GM12878 (cell line): ENCODE measurements at regions of chr6 and their contacts with region 1.

Region 1: DNA sequence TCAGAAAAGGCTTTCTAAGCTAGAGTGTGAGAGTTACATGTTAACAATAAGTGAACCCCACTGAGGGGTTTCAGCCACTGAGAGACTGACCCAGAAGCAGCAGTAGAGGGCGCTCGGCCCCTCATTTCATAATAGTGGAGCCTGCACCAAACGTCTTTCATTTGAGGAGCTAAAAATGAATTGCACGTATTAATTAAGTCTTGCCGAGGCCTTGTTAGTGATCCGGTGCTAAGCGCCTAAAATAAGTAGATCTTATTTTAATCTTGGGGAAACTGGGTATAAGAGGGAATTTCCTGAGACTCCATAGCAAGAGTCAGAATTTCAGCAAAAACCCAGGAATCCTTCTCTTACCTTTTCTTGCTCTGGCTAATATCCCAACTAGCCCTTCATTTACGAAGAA is 209.7 kb downstream of the FARS2 start:
- DNase-seq: peak; percentile 26
- ATAC-seq: peak; percentile 99
- H3K4me3 ChIP-seq: 0 out of 2 replicates have a peak overlapping the region, but pooled peaks have one; percentile 3
- H3K27ac ChIP-seq: no peak overlapping the region
- H3K4me1 ChIP-seq: 0 out of 2 replicates have a peak, but pooled peaks cover 3% of the 10 kb centered on the region
- H3K27me3 ChIP-seq: no peaks in the 10 kb centered on the region
- CTCF ChIP-seq: peak; percentile 84 to 88 (median 87)
- EP300 ChIP-seq: no peak
- POLR2A ChIP-seq: no peak
- RAD21 ChIP-seq: peak; percentile 95

Region 2: DNA sequence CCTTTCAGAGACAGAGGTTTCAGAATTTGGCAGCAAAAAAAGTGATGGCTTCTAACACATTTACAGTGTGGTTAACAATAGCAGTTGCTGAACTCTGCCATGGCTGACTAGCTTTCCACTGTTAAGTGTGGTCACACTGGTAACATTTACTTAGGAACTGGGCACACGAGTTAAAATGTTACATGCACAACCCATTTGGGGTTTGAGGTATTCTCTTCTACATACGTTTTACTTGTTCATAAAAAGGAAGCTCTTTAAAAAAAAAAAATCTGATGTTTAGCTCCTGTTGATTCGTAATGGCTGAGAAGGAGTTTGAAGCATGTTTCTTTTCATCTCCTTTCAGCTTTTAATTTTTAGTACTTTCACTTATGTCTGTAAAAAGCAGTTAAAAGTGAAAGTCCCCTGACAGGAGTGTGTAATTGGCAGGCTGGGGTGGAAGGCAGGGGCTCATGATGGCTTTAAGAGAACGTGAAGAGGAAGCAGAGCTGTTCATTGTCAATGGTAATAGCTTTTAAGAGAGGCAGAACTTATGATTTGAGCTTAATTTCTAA is 36.2 kb after region 1 on chr6:
- CTCF ChIA-PET with region 1: interaction called, 43 read pairs
- POLR2A ChIA-PET with region 1: no interaction called
- RAD21 ChIA-PET with region 1: interaction called, 28 read pairs
- SMC1A ChIA-PET with region 1: interaction called, 31 read pairs
- in situ Hi-C with region 1: no loop called
- intact Hi-C with region 1: loop called (anchors 2 kb)
- DNase-seq: peak; percentile 92
- ATAC-seq: peak; percentile 94
- H3K4me3 ChIP-seq: peak overlapping the region; percentile 60
- H3K27ac ChIP-seq: peak overlapping the region; percentile 88
- H3K4me1 ChIP-seq: peaks cover 26% of the 10 kb centered on the region
- H3K27me3 ChIP-seq: no peaks in the 10 kb centered on the region
- CTCF ChIP-seq: no peak
- EP300 ChIP-seq: peak in 1 of 2 experiments; percentile 85; a peak in 3 of 4 replicates
- POLR2A ChIP-seq: no peak
- RAD21 ChIP-seq: no peak

Region 3: GRCh38 chr6:5670811-5671561 is 199.9 kb after region 1 on chr6:
- CTCF ChIA-PET with region 1: interaction called, 13 read pairs
- POLR2A ChIA-PET with region 1: no interaction called
- RAD21 ChIA-PET with region 1: interaction called, 15 read pairs
- SMC1A ChIA-PET with region 1: interaction called, 5 read pairs
- in situ Hi-C with region 1: no loop called
- intact Hi-C with region 1: no loop called
- DNase-seq: no peak
- ATAC-seq: peak; percentile 81
- H3K4me3 ChIP-seq: no peak overlapping the region
- H3K27ac ChIP-seq: no peak overlapping the region
- H3K4me1 ChIP-seq: peaks cover 7% of the 10 kb centered on the region
- H3K27me3 ChIP-seq: no peaks in the 10 kb centered on the region
- CTCF ChIP-seq: no peak
- EP300 ChIP-seq: no peak
- POLR2A ChIP-seq: peak; percentile 24; the same call in 1 of the 2 replicates
- RAD21 ChIP-seq: no peak

Region 4: DNA sequence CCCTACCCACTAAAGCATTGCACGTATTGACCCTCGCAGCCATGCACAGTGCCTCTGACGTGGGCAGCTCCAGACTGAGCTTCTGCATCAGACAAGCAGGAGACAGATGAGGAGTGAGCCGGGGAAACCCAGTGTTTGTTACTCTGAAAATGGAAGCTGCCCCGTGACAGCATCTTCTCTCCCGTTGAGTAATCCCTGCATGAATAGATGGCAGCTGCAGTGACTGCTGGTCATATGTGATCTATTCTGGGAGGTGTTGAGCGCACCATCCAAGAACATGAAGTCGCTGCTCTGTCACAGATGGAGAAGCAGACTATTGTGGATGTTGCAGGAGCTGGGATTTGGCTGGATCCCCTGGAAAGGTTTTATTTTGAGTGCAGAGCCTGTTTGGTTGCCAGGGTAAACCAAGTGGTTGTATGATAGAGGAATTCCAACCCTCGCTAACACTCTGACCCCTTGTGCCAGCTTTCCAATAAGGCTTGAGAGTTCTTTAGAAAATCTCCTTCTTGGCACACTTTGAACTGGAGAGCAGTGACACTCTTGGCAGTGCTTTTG is 293.4 kb after region 1 on chr6:
- CTCF ChIA-PET with region 1: interaction called, 4 read pairs
- POLR2A ChIA-PET with region 1: no interaction called
- RAD21 ChIA-PET with region 1: no interaction called
- SMC1A ChIA-PET with region 1: interaction called, 5 read pairs
- in situ Hi-C with region 1: no loop called
- intact Hi-C with region 1: loop called (anchors 10 kb)
- DNase-seq: peak; percentile 8
- ATAC-seq: no peak; the same call in 2 of the 3 replicates
- H3K4me3 ChIP-seq: no peak overlapping the region
- H3K27ac ChIP-seq: no peak overlapping the region
- H3K4me1 ChIP-seq: peaks cover 7% of the 10 kb centered on the region
- H3K27me3 ChIP-seq: no peaks in the 10 kb centered on the region
- CTCF ChIP-seq: no peak
- EP300 ChIP-seq: no peak
- POLR2A ChIP-seq: no peak
- RAD21 ChIP-seq: no peak

Region 5: DNA sequence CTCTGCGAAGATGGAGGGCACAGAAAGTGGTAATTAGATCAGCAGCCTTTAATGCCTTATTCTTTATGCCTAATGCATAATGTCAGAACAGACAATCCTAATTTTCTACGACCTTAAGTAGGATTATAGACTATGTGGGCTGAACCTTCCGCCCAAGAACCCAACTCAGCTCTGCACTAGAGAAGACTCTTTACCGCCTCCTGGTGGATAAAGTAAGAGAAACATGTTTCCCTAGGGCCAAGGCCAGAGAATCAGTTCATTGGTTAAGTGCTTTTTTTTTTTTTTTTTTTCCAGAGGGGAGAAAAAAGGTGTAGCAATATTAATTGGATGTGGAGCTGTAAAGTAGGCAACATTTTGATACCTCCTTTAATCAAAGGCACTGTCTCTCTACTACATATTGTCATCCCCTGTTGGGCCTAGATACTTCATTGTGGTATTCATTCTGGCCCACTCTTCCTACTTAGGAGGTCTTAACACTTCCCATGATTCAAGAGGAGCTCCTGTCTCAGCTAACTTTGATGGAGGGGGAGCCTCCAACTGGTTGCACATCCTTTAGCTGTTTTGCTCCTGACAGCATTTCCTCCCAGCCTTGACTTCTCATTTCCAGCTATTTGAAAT is 660.6 kb after region 1 on chr6:
- CTCF ChIA-PET with region 1: interaction called, 22 read pairs
- POLR2A ChIA-PET with region 1: no interaction called
- RAD21 ChIA-PET with region 1: interaction called, 6 read pairs
- SMC1A ChIA-PET with region 1: interaction called, 4 read pairs
- in situ Hi-C with region 1: no loop called
- intact Hi-C with region 1: no loop called
- DNase-seq: no peak
- ATAC-seq: peak; percentile 67
- H3K4me3 ChIP-seq: no peak overlapping the region
- H3K27ac ChIP-seq: no peak overlapping the region
- H3K4me1 ChIP-seq: no peaks in the 10 kb centered on the region
- H3K27me3 ChIP-seq: no peaks in the 10 kb centered on the region
- CTCF ChIP-seq: peak; percentile 32 to 63 (median 45); a peak in 5 of 6 replicates
- EP300 ChIP-seq: no peak
- POLR2A ChIP-seq: no peak
- RAD21 ChIP-seq: peak; percentile 62